Mucosa of descending colon (tissue), 3 donors: ENCODE measurements at regions of chr15 and their contacts with region 1.

Region 1: DNA sequence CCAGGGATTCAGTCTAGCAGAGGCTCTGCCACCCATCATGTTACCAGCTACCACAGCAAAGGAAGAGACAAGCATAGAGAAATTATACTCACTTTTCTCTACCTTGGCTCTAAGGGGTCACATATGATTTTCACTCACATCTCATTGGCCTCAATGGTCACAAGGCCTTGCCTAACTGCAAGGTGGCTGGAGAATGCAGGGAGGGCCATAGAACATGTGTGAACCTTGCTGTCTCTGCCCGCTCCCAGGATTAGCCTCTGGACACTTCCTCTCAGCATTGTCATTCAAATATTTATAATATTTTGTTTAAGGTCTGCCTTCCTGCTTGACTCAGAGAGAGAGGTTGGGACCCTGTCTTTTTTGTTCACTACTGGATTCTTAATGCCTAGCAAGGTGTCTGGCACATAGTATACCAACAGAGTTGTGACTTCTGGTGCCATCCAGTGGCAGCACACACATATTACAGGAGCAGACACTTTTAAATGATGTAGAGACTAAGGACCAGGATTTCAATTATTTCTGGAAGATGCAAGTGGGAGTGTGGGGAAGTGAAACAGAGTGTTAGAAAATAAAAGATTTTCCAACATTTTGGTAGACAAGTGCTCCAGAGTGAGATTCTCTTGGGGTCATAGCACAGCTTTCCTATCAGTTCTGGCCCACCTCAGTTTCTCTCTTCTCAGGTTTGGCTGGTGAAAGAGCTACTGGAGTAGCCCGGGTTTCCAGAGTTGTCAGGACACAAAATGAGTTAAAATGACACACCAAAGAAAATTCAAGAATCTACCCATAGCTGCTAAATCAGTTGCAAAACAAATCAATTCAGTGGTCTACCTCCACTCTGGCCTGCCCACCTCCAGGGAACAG is 119.0 kb upstream of the RASGRP1 start:
- DNase-seq: peak in 2 of 3 donors; percentile 51 to 68
- ATAC-seq: peak; percentile 91
- H3K4me3 ChIP-seq: no peak overlapping the region
- H3K4me1 ChIP-seq: peaks cover 3% of the 10 kb centered on the region
- CTCF ChIP-seq: peak; percentile 65

Region 2: DNA sequence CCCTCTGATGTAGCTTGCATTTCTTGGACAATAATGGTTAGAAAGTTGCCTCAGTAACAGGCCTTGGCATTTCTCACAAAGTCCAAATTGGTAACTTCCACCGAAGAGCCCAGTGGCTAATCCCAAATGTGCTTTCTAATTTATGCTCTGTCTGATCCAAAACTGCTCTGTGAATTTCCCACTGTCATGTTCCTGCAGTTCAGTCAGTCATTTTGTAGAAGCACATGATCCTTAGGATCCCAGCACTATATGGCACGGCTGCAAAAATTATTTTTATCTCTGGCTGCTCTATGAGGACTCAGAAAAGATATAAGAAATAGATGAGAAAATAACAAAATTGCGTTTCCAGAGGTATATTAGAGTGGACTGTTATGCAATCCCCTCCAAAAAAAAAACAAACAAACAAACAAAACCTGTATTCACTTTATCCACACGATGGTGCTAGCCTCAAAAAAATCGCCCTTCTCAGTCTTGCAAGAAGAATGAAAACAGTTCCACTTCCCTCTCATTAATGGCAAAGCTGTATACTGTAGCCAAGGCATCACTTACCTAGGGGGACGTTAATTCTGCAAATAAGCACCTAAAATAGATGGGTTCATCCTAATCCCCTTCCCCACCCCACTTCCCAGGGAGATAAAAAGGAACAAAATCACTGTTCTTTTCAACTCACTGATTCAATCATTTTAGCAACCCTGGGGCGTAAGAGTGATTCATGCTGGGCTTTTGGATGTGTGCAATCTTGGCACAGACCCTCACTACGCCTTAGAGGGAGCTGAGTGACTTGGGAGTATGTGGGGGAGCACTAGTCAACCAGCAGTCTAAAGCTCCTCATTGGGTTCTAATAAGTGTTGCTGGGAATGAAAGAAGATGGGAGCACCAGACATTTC is 687.9 kb before region 1 on chr15:
- intact Hi-C with region 1: loop called in 1 of 2 experiments (anchors 10 kb)
- DNase-seq: peak in 1 of 3 donors; percentile 48
- ATAC-seq: peak; percentile 53
- H3K4me3 ChIP-seq: no peak overlapping the region
- H3K4me1 ChIP-seq: no peaks in the 10 kb centered on the region
- CTCF ChIP-seq: no peak

Region 3: DNA sequence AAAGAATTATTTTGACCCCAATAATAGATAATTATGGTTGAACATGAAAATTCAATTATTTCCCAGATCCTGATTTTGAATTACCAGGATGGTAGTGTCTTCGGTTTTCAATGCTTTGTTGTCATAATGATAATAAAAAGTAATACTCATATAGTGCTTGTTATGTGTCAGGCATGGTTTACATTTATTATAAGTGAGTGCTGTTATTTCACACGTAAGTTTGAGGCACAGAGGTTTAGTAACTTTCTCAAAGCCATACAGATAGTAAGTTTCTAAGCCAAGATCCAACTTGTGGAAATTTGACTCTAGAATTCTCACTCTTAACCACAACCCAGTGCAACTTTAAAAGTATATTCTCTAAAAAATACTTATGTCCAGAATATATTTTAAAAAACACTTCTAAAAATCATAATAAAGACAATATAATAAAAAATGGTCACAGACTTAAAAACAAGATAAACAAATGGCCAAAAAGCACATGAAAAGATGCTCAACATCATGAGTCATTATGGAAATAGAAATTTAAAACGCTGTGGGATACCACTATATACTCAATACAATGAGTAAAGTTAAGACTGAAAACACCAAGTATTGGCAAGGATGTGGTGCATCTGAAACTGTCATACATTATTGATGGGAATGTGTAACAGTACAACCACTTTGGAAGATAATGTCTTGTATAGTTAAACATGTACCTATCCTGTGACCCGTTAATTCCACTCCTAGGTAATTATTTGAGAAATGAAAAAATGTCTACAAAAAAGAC is 385.8 kb before region 1 on chr15:
- intact Hi-C with region 1: no loop called
- DNase-seq: no peak
- ATAC-seq: no peak
- H3K4me3 ChIP-seq: no peak overlapping the region
- H3K4me1 ChIP-seq: peaks cover 6% of the 10 kb centered on the region
- CTCF ChIP-seq: no peak

Region 4: GRCh38 chr15:38440353-38441129 is 243.1 kb before region 1 on chr15:
- intact Hi-C with region 1: loop called (anchors 5 to 10 kb)
- DNase-seq: peak in 2 of 3 donors; percentile 28 to 33
- ATAC-seq: peak; percentile 98
- H3K4me3 ChIP-seq: no peak overlapping the region
- H3K4me1 ChIP-seq: no peaks in the 10 kb centered on the region
- CTCF ChIP-seq: peak; percentile 80

Region 5: DNA sequence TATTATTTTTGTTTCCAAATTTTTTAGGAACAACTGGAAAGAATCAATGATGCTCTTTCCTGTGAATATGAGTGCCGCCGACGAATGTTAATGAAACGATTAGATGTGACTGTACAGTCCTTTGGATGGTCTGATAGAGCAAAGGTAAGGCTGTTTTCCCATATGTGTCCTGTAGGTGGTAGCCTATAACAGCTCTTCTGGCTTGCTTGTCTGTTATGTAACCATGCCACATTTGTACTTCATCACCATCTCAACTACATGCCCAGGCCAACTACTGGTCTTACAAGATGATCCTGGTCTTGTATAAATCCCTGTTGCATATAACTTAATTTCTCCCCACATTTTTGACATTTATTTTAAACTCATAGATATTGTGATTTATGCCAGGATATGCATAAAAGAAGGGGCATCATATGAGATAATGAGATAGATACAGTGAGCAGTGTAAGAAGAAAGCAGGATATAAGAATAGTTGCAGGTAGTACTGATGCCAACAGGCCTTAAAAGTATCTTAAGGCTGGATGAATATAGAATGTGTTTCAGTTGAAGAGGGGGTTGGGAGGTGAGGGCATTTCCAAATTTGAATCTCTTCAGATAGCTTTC is 209.4 kb before region 1 on chr15:
- intact Hi-C with region 1: loop called in 1 of 2 experiments (anchors 10 kb)
- DNase-seq: peak in 1 of 3 donors; percentile 70
- ATAC-seq: peak; percentile 99
- H3K4me3 ChIP-seq: no peak overlapping the region
- H3K4me1 ChIP-seq: no peaks in the 10 kb centered on the region
- CTCF ChIP-seq: peak; percentile 36

Region 6: DNA sequence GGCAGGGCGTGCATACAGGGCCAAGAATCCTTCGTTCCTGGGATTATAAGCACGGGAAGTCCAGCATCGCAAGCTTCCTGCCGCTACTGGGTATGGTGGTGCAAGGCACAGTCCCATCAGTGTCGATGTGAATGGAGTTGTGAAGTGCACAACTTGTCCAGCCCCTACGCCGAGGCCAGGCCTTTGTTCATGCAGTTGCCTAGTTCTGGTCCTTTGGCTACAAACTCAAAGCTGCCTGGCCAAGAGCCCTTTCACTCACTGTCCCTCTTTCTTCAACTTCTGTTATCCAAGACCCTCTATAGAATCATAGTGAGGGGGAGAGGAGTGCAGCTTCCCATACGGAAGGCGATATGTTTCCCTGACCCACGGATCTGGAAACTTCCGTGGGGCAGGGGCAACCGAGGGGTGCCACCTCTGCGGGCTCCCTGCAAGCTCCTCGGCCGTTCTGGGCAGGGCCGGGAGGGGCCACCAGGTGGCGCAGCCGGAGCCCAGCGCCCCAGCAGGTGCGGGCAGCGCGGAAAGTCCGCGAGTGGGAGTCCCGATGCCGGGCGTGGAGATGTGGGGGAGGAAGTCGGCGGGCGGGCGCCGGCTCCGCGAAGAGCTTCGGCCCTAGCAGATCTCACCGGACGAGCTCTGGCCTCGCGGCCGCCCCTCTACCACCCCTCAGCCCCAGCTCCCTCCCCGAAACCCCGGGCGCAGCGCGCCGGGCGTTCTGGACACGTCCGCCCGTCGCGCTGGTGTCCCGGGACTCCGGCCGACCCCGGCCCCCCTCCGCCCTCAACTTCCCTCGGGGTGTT is 119.7 kb before region 1 on chr15:
- intact Hi-C with region 1: loop called in 1 of 2 experiments (anchors 5 kb)
- DNase-seq: peak; percentile 83 to 89 (median 88)
- ATAC-seq: peak; percentile 92
- H3K4me3 ChIP-seq: peak overlapping the region; percentile 22
- H3K4me1 ChIP-seq: no peaks in the 10 kb centered on the region
- CTCF ChIP-seq: peak; percentile 90

Region 7: DNA sequence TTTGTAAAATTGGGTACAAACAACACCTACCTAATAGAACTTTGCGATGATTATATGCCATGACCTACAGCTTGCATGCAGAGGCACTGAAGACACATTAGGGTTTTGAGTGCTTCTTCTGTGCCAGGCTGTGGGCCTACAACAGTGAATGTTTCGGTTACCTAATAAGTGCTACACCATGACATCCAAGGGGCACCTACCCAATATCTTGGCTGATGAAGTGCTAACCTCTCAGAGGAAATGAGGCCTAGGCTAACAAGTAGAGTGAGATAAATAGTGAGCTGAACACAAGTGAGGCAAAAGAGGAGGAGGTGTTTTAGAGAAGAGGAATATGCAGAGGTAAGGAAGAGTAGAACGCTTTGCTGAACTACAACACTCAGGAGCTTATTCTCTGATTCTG is 106.8 kb before region 1 on chr15:
- intact Hi-C with region 1: no loop called
- DNase-seq: no peak
- ATAC-seq: peak; percentile 8
- H3K4me3 ChIP-seq: no peak overlapping the region
- H3K4me1 ChIP-seq: no peaks in the 10 kb centered on the region
- CTCF ChIP-seq: no peak

Region 8: DNA sequence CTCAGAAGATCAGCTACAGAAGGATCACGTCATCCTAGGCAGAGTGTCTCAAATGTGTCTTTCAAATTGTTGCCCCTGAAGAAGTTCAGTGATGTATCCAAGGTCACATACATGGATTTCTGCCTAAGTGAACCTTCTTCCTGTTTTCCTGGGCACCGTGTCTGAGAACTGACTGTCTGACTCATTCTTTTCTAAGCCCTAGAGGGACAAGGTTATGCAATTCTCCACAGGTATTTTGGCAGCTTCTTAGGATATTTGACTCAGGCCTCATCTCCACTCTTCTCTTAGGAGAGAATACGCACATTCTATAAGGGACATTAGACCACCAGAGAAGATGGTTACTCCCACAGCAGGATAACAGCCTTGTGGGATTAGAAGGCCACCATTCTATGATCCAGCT is 505.3 kb after region 1 on chr15:
- intact Hi-C with region 1: no loop called
- DNase-seq: no peak
- ATAC-seq: no peak
- H3K4me3 ChIP-seq: no peak overlapping the region
- H3K4me1 ChIP-seq: no peaks in the 10 kb centered on the region
- CTCF ChIP-seq: no peak